ENCODE measurements at regions of chr3 and their contacts with region 1.

Region 1: DNA sequence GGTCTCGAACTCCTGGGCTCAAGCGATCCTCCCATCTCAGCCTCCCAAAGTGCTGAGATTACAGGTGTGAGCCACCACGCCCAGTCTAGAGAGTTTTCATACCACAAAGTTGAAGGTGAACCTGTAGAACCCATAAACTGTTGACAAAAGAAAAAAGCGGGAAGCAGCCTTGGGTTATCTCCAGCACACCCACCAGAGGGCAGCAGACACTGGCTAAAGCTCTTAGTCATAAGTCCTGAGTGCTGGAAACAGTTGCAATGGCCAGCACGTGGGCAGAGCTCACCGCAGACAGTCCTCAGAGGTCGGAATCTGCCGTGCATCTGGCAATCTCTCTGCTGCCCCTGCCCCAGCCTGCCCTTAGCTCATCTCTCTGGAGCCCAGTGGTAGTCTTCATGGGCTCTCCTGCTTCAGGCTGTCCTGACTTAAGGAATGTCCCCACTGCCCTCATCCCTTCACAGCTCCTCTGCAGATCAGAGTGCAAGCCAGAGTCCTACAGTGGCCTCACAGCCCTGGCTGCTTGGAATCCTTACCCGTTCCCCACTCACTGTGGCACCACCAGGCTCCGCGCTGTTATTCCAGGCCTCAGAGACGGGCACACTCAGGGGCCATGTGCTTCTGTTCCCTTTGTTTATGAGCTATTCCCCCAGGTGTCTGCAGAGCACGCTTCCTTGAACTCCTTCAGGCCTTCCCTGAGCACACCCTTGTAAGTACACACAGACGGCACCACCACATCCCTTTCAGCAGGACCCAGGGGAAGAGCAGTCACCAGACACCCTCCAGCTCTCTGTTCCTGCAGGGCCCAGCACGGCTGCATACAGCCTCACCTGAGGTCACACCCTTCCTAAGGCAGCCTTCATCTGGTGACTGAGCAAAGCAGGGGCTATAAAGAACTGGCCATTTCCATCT is 8.8 kb upstream of the ELP6 start:
- DNase-seq: peak; percentile 93
- H3K4me3 ChIP-seq: no peak overlapping the region
- H3K27ac ChIP-seq: no peak overlapping the region
- H3K4me1 ChIP-seq: no peaks in the 10 kb centered on the region
- CTCF ChIP-seq: peak; percentile 86

Region 2: GRCh38 chr3:47791193-47791855 is 269.0 kb after region 1 on chr3:
- CTCF ChIA-PET with region 1: interaction called, 5 read pairs
- POLR2A ChIA-PET with region 1: interaction called, 6 read pairs
- intact Hi-C with region 1: loop called (anchors 1 kb)
- DNase-seq: no peak
- H3K4me3 ChIP-seq: no peak overlapping the region
- H3K27ac ChIP-seq: no peak overlapping the region
- H3K4me1 ChIP-seq: peaks cover 11% of the 10 kb centered on the region
- CTCF ChIP-seq: no peak

Region 3: DNA sequence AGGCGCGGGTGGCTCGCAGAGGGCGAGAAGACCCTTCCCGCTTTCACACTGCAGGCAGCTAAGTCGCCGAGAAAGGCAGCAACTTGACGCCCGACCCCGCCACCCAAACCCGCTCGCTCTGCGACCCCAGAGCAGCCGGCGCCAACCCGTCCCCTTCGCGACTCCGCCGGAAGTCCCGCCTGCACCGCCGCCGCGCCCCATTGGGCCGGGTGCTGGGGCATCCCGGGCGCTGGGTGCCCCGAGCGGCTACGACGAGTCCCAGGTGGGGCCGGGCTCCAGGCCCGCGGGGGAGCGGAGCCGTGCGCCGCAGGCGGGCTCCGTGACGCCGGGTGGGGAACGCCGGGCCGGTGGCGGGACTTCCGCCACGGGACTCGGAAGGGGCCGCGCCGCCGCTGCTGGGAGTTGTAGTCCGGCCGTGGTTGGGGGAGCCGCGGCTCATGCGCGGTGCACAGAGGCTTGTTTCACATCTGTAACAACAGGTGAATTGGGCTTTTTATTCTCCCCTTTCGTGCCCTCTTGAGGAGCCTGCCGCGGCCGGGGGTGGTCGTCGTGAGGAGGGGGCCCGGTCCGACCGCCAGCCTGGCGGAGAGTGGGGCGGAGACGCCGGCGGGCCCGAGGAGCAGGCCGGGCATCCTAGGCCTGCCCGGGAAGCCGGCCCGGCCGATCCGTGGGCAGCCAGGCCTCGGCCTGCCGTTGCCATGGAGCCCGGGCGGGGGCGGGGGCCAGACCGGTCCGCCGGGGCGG is 280.6 kb after region 1 on chr3 and contains the start of gene DHX30:
- CTCF ChIA-PET with region 1: no interaction called
- POLR2A ChIA-PET with region 1: no interaction called
- intact Hi-C with region 1: loop called (anchors 5 kb)
- DNase-seq: peak; percentile 88
- H3K4me3 ChIP-seq: peak within 1 kb of the TSS; percentile 90
- H3K27ac ChIP-seq: peak within 1 kb of the TSS; percentile 69
- H3K4me1 ChIP-seq: peaks cover 8% of the 10 kb centered on the region
- CTCF ChIP-seq: no peak
- total RNA-seq, gene DHX30: 93.0 and 102 TPM in 2 replicates

Region 4: DNA sequence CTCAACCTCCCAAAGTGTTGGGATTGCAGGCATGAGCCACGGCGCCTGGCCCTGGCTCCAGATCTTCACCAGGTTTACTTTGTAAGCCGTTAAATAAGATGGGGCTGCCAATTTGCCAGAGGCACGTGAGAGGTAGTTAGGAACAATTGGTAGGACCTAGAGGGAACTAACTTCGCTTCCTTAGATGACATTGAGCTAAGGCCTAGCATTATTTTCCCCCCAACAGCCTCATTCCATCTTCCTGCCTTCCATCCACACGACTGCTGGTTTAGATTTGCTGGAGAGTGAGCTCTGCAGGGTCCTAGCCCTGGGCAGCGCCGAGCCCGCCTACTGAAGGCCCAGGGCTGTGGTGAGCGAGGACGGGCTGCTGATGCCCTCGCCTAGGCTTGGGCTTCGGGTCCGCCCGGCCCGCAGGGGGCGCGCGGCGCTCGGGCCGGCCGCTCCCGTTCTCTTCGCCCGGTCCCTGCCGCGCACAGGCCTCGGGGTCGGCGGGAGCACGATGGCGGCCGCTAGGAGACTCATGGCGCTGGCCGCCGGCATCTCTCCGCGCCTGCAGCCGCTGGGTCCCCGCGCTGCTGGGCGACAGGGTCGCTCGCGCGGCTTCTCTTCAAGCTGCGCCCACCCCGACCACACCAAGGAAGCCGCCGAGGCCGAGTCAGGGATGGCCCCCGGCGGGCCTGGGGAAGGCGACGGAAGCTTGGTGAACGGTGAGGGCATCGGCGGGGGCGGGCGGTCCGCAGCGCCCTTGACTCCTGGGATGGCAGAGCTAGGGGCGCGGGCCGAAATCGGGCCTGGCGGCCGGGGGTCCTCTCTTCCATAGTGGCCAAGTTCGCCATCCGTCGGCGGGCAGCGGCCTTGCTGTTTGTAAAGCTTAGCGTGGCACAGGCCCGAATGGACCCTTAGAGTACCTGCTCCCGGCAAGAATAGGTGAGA is 302.5 kb after region 1 on chr3:
- CTCF ChIA-PET with region 1: no interaction called
- POLR2A ChIA-PET with region 1: interaction called, 3 read pairs
- intact Hi-C with region 1: loop called (anchors 1 kb)
- DNase-seq: peak; percentile 87
- H3K4me3 ChIP-seq: peak overlapping the region; percentile 98
- H3K27ac ChIP-seq: peak overlapping the region; percentile 24
- H3K4me1 ChIP-seq: peaks cover 20% of the 10 kb centered on the region
- CTCF ChIP-seq: peak; percentile 86

Region 5: DNA sequence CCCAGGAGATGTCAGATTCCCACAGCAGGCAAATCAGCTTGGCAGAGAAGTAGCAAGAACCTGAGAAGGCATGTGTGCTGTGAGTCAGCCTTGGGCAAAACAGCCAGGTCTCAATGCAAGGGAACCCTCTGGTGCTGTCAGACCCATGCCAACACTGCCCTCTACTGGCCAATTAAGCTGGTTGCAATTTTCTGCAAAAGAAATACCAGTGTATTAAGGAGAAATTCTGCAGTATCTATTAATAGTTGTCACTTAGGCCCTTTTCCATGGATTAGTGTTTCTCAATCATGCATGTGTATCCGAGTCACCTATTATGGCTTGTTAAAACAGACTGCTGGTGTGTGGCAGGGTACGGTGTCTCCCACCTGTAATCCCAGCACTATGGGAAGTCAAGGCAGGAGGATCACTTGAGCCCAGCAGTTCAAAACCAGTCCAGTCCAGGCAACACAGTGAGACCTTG is 467.7 kb after region 1 on chr3:
- CTCF ChIA-PET with region 1: no interaction called
- POLR2A ChIA-PET with region 1: no interaction called
- intact Hi-C with region 1: loop called (anchors 5 kb)
- DNase-seq: peak; percentile 83
- H3K4me3 ChIP-seq: no peak overlapping the region
- H3K27ac ChIP-seq: no peak overlapping the region
- H3K4me1 ChIP-seq: no peaks in the 10 kb centered on the region
- CTCF ChIP-seq: peak; percentile 98

Region 6: DNA sequence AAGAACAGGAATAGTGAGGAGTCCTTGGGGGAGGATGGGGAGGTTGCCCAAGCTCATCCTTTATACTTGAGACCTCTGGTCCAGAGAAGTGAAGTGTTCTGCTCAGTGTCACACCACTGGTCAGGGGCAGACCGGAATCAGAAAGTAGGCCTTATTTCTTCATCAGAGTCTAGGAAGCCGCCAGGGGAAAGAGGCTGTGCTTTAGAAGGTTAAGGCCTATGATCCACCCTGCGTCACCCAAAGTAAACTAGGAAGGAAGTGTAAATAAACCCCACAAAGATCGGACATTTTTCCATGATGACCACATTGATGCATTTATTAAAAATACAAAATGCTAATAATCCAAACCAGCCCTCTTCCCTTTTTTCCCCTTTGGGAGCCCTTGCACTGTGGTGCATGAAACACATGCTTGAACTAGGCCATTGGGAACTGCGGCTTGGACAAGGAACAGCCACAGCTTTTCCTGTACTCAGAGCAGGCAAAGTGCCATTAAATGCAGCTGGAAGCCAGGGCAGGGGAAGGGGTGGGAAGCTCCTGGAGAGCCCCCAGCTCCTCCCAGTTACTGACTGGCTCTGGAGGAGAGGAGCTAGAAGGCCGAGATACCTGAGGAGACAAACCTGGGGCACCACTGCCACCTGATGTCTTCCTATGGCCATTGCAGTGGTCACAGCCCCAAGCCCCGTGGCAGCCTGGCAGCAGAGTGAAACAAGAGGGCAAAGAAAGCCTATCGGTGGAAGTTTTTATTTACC is 628.9 kb after region 1 on chr3:
- CTCF ChIA-PET with region 1: interaction called, 5 read pairs
- POLR2A ChIA-PET with region 1: no interaction called
- intact Hi-C with region 1: loop called (anchors 1 kb)
- DNase-seq: peak; percentile 68
- H3K4me3 ChIP-seq: no peak overlapping the region
- H3K27ac ChIP-seq: no peak overlapping the region
- H3K4me1 ChIP-seq: no peaks in the 10 kb centered on the region
- CTCF ChIP-seq: peak; percentile 89